ENCODE measurements at regions of chr4 and their contacts with region 1.

Region 1: DNA sequence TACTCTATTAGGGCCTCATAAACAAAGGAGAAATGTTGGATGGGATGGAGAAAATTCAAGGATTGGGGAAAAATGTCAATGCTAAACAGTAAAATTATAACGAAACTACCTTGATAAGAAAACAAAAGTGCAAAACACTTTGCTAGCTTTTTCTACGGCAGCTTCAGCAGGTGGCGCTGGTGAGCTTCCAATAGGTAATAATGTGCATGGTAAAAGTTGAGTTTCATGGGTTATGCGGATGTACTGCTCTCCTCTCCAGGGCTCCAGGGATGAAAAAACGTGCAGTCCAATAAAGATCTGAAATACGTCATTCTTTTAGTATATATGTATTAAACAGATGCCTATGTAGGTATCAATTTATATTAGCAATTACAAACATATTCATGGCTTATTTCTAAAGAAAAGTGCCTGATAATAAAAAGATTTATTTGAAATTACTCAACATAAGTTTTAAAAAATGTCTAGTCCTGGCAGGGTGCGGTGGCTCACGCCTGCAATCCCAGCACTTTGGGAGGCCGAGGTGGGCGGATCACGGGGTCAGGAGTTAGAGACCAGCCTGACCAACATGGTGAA is 239.6 kb downstream of the GRXCR1 start:
- DNase-seq: peak in 2 of 3 donors; percentile 32 to 65
- ATAC-seq: no peak
- H3K4me3 ChIP-seq: no peak overlapping the region
- H3K27ac ChIP-seq: no peak overlapping the region
- H3K4me1 ChIP-seq: no peaks in the 10 kb centered on the region
- H3K27me3 ChIP-seq: no peaks in the 10 kb centered on the region

Region 2: GRCh38 chr4:44629280-44629866 is 1497.3 kb after region 1 on chr4:
- intact Hi-C with region 1: loop called in 2 of 4 experiments (anchors 10 kb)
- DNase-seq: peak in 2 of 3 donors; percentile 15 to 47
- ATAC-seq: peak in 1 of 2 donors; percentile 62
- H3K4me3 ChIP-seq: no peak overlapping the region
- H3K27ac ChIP-seq: no peak overlapping the region
- H3K4me1 ChIP-seq: no peaks in the 10 kb centered on the region
- H3K27me3 ChIP-seq: no peaks in the 10 kb centered on the region

Measured in right cardiac atrium (tissue), 5 donors.